Common myeloid progenitor, CD34-positive (primary cell): ENCODE measurements at regions of chr4 and their contacts with region 1.

Region 1: GRCh38 chr4:165700855-165701254 is 172.2 kb upstream of the TLL1 start:
- DNase-seq: peak; percentile 23 to 49 (median 45)
- H3K4me3 ChIP-seq: no peak overlapping the region
- H3K27ac ChIP-seq: no peak overlapping the region
- H3K4me1 ChIP-seq: peaks cover 0 to 7% (median 0%) of the 10 kb centered on the region in 4 experiments
- H3K27me3 ChIP-seq: no peaks in the 10 kb centered on the region

Region 2: GRCh38 chr4:165532976-165533375 is 167.9 kb before region 1 on chr4:
- CTCF ChIA-PET with region 1: interaction called, 14 read pairs
- POLR2A ChIA-PET with region 1: no interaction called
- DNase-seq: no peak
- H3K4me3 ChIP-seq: no peak overlapping the region
- H3K27ac ChIP-seq: no peak overlapping the region
- H3K4me1 ChIP-seq: no peaks in the 10 kb centered on the region
- H3K27me3 ChIP-seq: peaks cover 0 to 2% (median 0%) of the 10 kb centered on the region in 5 experiments